Head of caudate nucleus (tissue), 42 donors: ENCODE measurements at regions of chr12 and their contacts with region 1.

Region 1: GRCh38 chr12:109804820-109805761 is 28.1 kb downstream of the TRPV4 start:
- DNase-seq: peak in 41 of 42 donors; percentile 65 to 93 (median 80)

Region 2: GRCh38 chr12:109844983-109845823 is 40.1 kb after region 1 on chr12:
- intact Hi-C with region 1: loop called (anchors 5 kb)
- DNase-seq: peak; percentile 65 to 95 (median 90)

Region 3: DNA sequence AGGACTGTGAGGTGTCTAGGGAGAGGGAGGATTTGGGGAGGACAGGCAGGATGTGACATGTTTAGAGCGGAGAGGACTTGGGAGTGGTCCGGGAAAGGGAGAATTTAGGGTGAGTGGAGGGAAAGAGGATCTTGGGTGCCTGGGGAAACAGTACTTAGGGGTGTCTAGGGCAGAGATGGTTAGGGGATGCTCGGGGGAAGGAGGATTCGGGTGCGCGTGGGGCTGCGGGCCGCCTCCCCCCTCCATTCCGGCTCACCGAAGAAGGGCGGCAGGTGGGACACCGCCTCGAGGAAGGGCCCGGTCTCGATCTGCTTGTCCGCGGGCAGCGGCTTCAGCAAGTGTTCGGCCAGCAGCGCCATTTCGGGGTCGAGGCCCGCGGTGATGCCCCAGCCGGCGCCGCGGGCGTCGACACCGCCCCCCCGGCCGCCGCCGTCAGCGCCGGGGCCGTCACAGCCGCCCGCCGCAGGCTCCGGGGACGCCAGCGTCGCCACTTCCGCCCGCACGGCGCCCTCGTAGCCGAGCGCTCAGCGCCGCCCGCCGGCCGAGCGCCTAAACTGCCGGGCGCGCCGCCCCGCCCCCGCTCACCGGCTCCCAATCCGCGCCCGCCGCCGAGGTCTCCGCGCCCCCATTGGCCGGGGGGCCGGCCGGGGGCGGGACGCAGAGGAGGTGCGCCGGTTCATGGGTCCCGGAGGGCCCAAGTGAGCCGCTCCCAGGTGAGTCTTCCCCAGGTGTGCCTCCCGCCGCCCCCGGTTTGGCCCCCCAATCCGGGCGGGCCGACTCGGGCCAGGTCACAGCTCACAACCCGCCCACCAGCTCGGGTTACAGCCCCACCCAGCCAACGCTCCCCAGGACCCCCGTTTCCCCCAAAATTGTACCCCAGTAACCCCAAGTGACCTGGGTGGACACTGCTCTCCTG is 75.2 kb after region 1 on chr12 and contains the start of gene GLTP:
- intact Hi-C with region 1: loop called (anchors 5 kb)
- DNase-seq: peak; percentile 30 to 92 (median 84)